GM13976 (cell line): ENCODE measurements at regions of chr14 and their contacts with region 1.

Region 1: GRCh38 chr14:76956316-76957090 is 72.0 kb downstream of the IRF2BPL start:
- DNase-seq: peak; percentile 57
- CTCF ChIP-seq: no peak

Region 2: GRCh38 chr14:77040059-77040740 is 83.7 kb after region 1 on chr14:
- in situ Hi-C with region 1: loop called (anchors 5 kb)
- DNase-seq: peak; percentile 75
- CTCF ChIP-seq: no peak

Region 3: GRCh38 chr14:77409131-77409533 is 452.6 kb after region 1 on chr14:
- in situ Hi-C with region 1: no loop called
- DNase-seq: no peak
- CTCF ChIP-seq: no peak